ENCODE measurements at regions of chr9 and their contacts with region 1.

Region 1: GRCh38 chr9:109969011-109969410 is 189.0 kb downstream of the PALM2AKAP2 start:
- DNase-seq: no peak
- ATAC-seq: peak; percentile 71
- H3K4me3 ChIP-seq: no peak overlapping the region
- H3K27ac ChIP-seq: peak overlapping the region; percentile 51
- H3K4me1 ChIP-seq: peaks cover 18% of the 10 kb centered on the region
- H3K27me3 ChIP-seq: no peaks in the 10 kb centered on the region

Region 2: GRCh38 chr9:110029429-110029955 is 60.5 kb after region 1 on chr9:
- intact Hi-C with region 1: loop called in 1 of 4 experiments (anchors 10 kb)
- DNase-seq: no peak
- ATAC-seq: peak; percentile 82 to 88
- H3K4me3 ChIP-seq: no peak overlapping the region
- H3K27ac ChIP-seq: no peak overlapping the region
- H3K4me1 ChIP-seq: peaks cover 6% of the 10 kb centered on the region
- H3K27me3 ChIP-seq: no peaks in the 10 kb centered on the region

Measured in right cardiac atrium (tissue), 5 donors.